Caco-2 (cell line): ENCODE measurements at regions of chr1 and their contacts with region 1.

Region 1: DNA sequence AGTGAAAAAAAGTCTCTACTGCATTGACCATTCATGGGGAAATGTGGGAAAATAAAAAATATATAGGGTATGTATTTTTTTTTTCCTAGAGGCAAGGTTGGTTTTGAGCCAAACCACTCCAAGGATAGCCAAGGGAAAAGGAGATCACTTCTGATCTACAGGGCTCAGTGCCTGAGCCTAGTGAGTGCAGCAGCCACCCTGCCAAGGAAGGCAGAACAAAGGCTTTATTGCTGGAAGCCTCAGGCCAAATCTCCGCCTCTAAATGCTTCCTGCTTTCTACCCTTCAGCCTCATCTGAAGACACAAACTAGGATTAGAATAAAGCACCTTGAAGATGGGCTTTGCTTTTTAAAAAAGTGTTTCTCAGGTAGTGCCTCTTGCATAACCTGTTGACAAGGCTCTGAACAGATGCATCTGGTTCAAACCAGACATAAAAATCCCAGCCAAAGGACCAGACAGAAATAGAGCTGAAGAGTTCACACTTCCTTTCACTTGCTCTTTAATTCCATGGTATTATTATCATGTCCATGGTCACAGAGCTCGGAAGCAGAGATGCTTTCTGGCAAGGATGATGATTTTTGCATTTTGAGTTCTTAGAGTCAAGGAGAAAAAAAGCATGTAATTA is 10.5 kb downstream of the C1orf115 start:
- DNase-seq: no peak
- H3K4me3 ChIP-seq: no peak overlapping the region
- H3K4me3 Mint-ChIP-seq: no peak overlapping the region
- H3K27ac Mint-ChIP-seq: no peak overlapping the region
- H3K4me1 ChIP-seq: peaks cover 28% of the 10 kb centered on the region
- H3K4me1 Mint-ChIP-seq: peaks cover 12% of the 10 kb centered on the region
- H3K27me3 ChIP-seq: no peaks in the 10 kb centered on the region
- H3K27me3 Mint-ChIP-seq: no peaks in the 10 kb centered on the region
- CTCF ChIP-seq: no peak

Region 2: DNA sequence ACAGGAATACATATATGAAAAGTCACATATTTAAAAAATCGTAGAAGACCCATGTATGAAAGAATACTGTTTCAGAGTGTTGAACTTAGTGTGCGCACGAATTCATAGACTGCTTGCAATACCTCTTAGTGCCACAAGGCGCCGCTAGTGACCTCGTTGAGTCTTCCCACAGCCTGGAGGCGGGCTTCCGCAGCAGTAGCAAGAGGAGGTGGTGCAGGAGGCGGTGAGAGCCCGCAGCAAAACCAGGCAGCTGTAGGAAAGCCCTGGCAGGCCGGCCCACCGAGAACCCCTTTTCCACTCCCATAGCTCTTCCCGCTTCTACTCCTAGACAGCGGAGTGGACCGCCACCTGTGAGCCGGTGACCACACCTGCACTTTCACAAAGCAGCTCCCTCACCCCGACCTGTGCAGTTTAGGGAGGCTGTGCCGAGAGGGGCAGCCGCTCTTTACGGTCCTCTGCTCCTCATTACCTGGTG is 109.5 kb after region 1 on chr1:
- CTCF ChIA-PET with region 1: no interaction called
- POLR2A ChIA-PET with region 1: interaction called, 10 read pairs
- intact Hi-C with region 1: no loop called
- DNase-seq: peak; percentile 59 to 67
- H3K4me3 ChIP-seq: no peak overlapping the region
- H3K4me3 Mint-ChIP-seq: no peak overlapping the region
- H3K27ac Mint-ChIP-seq: no peak overlapping the region
- H3K4me1 ChIP-seq: no peaks in the 10 kb centered on the region
- H3K4me1 Mint-ChIP-seq: no peaks in the 10 kb centered on the region
- H3K27me3 ChIP-seq: no peaks in the 10 kb centered on the region
- H3K27me3 Mint-ChIP-seq: no peaks in the 10 kb centered on the region
- CTCF ChIP-seq: peak; percentile 67 to 85

Region 3: GRCh38 chr1:220926146-220926545 is 225.5 kb after region 1 on chr1:
- CTCF ChIA-PET with region 1: no interaction called
- POLR2A ChIA-PET with region 1: no interaction called
- intact Hi-C with region 1: no loop called
- DNase-seq: no peak
- H3K4me3 ChIP-seq: no peak overlapping the region
- H3K4me3 Mint-ChIP-seq: no peak overlapping the region
- H3K27ac Mint-ChIP-seq: no peak overlapping the region
- H3K4me1 ChIP-seq: no peaks in the 10 kb centered on the region
- H3K4me1 Mint-ChIP-seq: no peaks in the 10 kb centered on the region
- H3K27me3 ChIP-seq: no peaks in the 10 kb centered on the region
- H3K27me3 Mint-ChIP-seq: peaks cover 5% of the 10 kb centered on the region
- CTCF ChIP-seq: no peak